K562 (cell line): ENCODE measurements at regions of chr10 and their contacts with region 1.

Region 1: DNA sequence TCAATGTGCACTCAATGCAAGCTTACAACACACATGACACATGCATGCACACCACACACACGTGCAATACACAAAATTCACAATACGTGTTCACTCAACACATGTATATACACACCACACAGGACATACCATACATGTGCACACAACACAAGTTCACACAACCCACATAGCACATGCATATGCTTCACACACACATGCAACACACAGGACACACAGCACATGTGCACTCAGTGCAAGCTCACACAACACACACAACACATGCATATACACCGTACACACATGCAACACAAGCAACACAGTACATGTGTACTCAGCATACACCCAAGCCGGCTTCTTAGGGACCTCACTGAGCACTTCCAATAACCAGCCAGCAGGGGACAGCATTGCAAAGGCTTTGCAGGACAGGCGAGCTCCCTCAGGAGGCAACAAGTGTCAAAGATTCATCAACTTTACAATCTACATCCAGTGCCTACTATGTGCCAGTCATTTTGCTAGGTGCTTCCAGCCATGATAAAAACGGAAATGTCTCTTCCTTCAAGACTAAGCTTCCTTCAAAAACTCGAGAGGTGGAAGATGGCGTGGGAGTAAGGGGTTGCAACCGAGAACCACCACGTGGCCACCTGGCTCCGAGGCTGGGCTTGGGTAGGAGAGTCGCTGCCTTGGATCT is 61.1 kb downstream of the JCAD start:
- DNase-seq: peak; percentile 69 to 83 (median 76)
- ATAC-seq: peak; percentile 93
- H3K4me3 ChIP-seq: no peak overlapping the region
- H3K27ac ChIP-seq: no peak overlapping the region
- H3K4me1 ChIP-seq: no peaks in the 10 kb centered on the region
- H3K27me3 ChIP-seq: peaks cover 0 to 16% of the 10 kb centered on the region in 2 experiments; a peak in 4 of 5 replicates
- CTCF ChIP-seq: peak; percentile 97 to 99 (median 99)
- EP300 ChIP-seq: no peak
- POLR2A ChIP-seq: no peak
- RAD21 ChIP-seq: peak; percentile 95 to 97

Region 2: GRCh38 chr10:29926693-29927048 is 71.6 kb before region 1 on chr10:
- CTCF ChIA-PET with region 1: no interaction called
- POLR2A ChIA-PET with region 1: no interaction called
- in situ Hi-C with region 1: no loop called
- intact Hi-C with region 1: no loop called
- DNase-seq: peak in 1 of 4 experiments; percentile 3
- ATAC-seq: no peak; the same call in 2 of the 3 replicates
- H3K4me3 ChIP-seq: no peak overlapping the region
- H3K27ac ChIP-seq: no peak overlapping the region
- H3K4me1 ChIP-seq: no peaks in the 10 kb centered on the region
- H3K27me3 ChIP-seq: no peaks in the 10 kb centered on the region; a peak in 2 of 5 replicates
- CTCF ChIP-seq: peak; percentile 26 to 36 (median 31); a peak in 2 of 6 replicates
- EP300 ChIP-seq: no peak
- POLR2A ChIP-seq: no peak
- RAD21 ChIP-seq: peak in 1 of 2 experiments; percentile 26; a peak in 2 of 4 replicates

Region 3: GRCh38 chr10:30070001-30070685 is 71.9 kb after region 1 on chr10:
- CTCF ChIA-PET with region 1: no interaction called
- POLR2A ChIA-PET with region 1: no interaction called
- in situ Hi-C with region 1: no loop called
- intact Hi-C with region 1: no loop called
- DNase-seq: peak; percentile 37 to 59 (median 48)
- ATAC-seq: peak; percentile 78
- H3K4me3 ChIP-seq: no peak overlapping the region
- H3K27ac ChIP-seq: no peak overlapping the region
- H3K4me1 ChIP-seq: peaks cover 0 to 11% of the 10 kb centered on the region in 2 experiments; a peak in 4 of 5 replicates
- H3K27me3 ChIP-seq: no peaks in the 10 kb centered on the region; a peak in 1 of 5 replicates
- CTCF ChIP-seq: no peak
- EP300 ChIP-seq: peak; percentile 91
- POLR2A ChIP-seq: no peak
- RAD21 ChIP-seq: no peak

Region 4: GRCh38 chr10:30231071-30231652 is 232.9 kb after region 1 on chr10:
- CTCF ChIA-PET with region 1: no interaction called
- POLR2A ChIA-PET with region 1: no interaction called
- in situ Hi-C with region 1: loop called (anchors 10 kb)
- intact Hi-C with region 1: no loop called
- DNase-seq: no peak
- ATAC-seq: no peak
- H3K4me3 ChIP-seq: no peak overlapping the region
- H3K27ac ChIP-seq: no peak overlapping the region
- H3K4me1 ChIP-seq: no peaks in the 10 kb centered on the region
- H3K27me3 ChIP-seq: peaks cover 8 to 16% of the 10 kb centered on the region in 2 experiments; a peak in 4 of 5 replicates
- CTCF ChIP-seq: no peak
- EP300 ChIP-seq: no peak
- POLR2A ChIP-seq: no peak
- RAD21 ChIP-seq: no peak

Region 5: GRCh38 chr10:30241422-30242110 is 243.3 kb after region 1 on chr10:
- CTCF ChIA-PET with region 1: interaction called, 18 read pairs
- POLR2A ChIA-PET with region 1: no interaction called
- in situ Hi-C with region 1: loop called (anchors 10 kb)
- intact Hi-C with region 1: loop called (anchors 1 kb)
- DNase-seq: no peak
- ATAC-seq: no peak
- H3K4me3 ChIP-seq: no peak overlapping the region
- H3K27ac ChIP-seq: no peak overlapping the region
- H3K4me1 ChIP-seq: no peaks in the 10 kb centered on the region
- H3K27me3 ChIP-seq: peaks cover 0 to 2% of the 10 kb centered on the region in 2 experiments; a peak in 3 of 5 replicates
- CTCF ChIP-seq: no peak
- EP300 ChIP-seq: no peak
- POLR2A ChIP-seq: no peak
- RAD21 ChIP-seq: no peak

Region 6: GRCh38 chr10:30384701-30385201 is 386.5 kb after region 1 on chr10:
- CTCF ChIA-PET with region 1: no interaction called
- POLR2A ChIA-PET with region 1: no interaction called
- in situ Hi-C with region 1: loop called (anchors 10 kb)
- intact Hi-C with region 1: loop called (anchors 5 kb)
- DNase-seq: peak in 3 of 4 experiments; percentile 26 to 57 (median 34)
- ATAC-seq: peak; percentile 92
- H3K4me3 ChIP-seq: no peak overlapping the region
- H3K27ac ChIP-seq: no peak overlapping the region
- H3K4me1 ChIP-seq: no peaks in the 10 kb centered on the region; a peak in 1 of 5 replicates
- H3K27me3 ChIP-seq: no peaks in the 10 kb centered on the region
- CTCF ChIP-seq: peak; percentile 57 to 60 (median 60)
- EP300 ChIP-seq: no peak
- POLR2A ChIP-seq: no peak
- RAD21 ChIP-seq: peak in 1 of 2 experiments; percentile 46; a peak in 2 of 4 replicates

Region 7: GRCh38 chr10:30600005-30600404 is 601.7 kb after region 1 on chr10:
- CTCF ChIA-PET with region 1: no interaction called
- POLR2A ChIA-PET with region 1: no interaction called
- in situ Hi-C with region 1: loop called (anchors 10 kb)
- intact Hi-C with region 1: no loop called
- DNase-seq: peak in 1 of 4 experiments; percentile 55
- ATAC-seq: peak; percentile 84
- H3K4me3 ChIP-seq: no peak overlapping the region
- H3K27ac ChIP-seq: no peak overlapping the region
- H3K4me1 ChIP-seq: peaks cover 1 to 4% of the 10 kb centered on the region in 2 experiments; a peak in 3 of 5 replicates
- H3K27me3 ChIP-seq: no peaks in the 10 kb centered on the region
- CTCF ChIP-seq: no peak
- EP300 ChIP-seq: no peak
- POLR2A ChIP-seq: no peak
- RAD21 ChIP-seq: no peak